Activated B cell treated with CpG ODN at 0.5 μM for 24 hours (primary cell): ENCODE measurements at regions of chr2 and their contacts with region 1.

Region 1: DNA sequence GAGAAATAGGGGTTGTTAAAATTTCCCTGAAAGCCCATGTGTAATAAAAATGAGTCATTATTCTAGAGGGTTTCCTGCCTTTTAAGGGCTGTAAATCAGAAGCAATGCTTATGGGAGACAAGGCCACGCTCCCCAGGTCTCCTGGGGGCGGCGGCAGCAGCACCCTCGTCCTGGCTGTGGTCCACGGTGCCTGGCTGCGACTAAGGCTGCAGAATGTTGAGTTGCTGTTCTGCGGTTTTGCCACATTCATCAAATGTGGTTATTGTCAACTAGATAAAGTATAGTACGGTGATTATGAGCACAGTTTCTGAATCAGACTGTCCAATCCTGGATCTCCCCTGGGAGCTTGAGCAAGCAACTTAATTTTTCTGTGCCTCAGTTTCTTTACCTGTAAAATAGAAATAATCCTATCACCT is 11.9 kb upstream of the AGFG1 start:
- DNase-seq: peak; percentile 53
- ATAC-seq: peak; percentile 78
- H3K4me3 Mint-ChIP-seq: peak overlapping the region; percentile 63
- H3K27ac Mint-ChIP-seq: peak overlapping the region; percentile 79
- H3K4me1 Mint-ChIP-seq: peaks cover 76% of the 10 kb centered on the region
- H3K27me3 Mint-ChIP-seq: no peaks in the 10 kb centered on the region
- CTCF ChIP-seq: no peak

Region 2: DNA sequence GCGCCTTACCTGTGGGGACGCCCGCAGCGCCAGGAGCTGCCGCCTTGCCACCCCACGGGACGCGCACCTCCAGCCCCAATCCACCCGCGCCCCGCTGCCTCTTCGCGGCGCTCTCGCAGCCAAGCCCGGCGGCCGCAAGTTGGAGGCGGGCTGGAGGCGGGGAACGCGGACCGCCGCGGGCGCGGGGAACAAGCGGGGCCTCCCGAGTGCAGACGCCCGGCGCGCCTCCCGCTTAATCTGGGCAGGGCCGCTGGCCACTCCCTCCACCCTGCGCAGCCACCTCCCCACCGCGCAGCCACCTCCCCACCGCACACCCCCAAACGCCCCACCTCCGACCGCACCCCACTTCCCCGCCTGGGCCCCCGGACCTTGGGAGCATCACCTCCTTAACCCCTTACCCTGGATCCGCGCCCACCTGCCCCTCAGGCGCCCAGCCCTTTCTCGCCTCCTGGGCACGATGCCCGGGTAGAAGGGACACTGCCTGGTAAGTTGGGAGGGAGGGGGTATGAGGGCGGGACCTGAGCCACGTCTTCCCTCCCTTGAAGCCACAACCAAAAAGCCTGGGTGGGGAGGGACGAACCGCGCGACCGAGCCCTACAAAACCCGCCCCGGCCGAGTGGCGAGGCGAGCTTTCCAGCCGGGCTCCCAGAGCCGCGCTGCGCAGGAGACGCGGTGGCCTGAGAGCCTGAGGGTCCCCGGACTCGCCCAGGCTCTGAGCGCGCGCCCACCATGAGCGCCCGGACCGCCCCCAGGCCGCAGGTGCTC is 295.9 kb before region 1 on chr2 and contains the starts of genes COL4A3 and COL4A4:
- CTCF ChIA-PET with region 1: no interaction called
- POLR2A ChIA-PET with region 1: no interaction called
- intact Hi-C with region 1: loop called (anchors 5 kb)
- DNase-seq: peak; percentile 54
- ATAC-seq: peak; percentile 78
- H3K4me3 Mint-ChIP-seq: peak within 1 kb of the TSS; percentile 87
- H3K27ac Mint-ChIP-seq: peak within 1 kb of the TSS; percentile 89
- H3K4me1 Mint-ChIP-seq: peaks cover 44% of the 10 kb centered on the region
- H3K27me3 Mint-ChIP-seq: peaks cover 5% of the 10 kb centered on the region
- CTCF ChIP-seq: no peak
- total RNA-seq, gene COL4A3: 15.5 and 18.3 TPM in 2 replicates
- total RNA-seq, gene COL4A4: 9.3 and 10.9 TPM in 2 replicates

Region 3: GRCh38 chr2:227363756-227364155 is 96.3 kb before region 1 on chr2:
- CTCF ChIA-PET with region 1: no interaction called
- POLR2A ChIA-PET with region 1: no interaction called
- intact Hi-C with region 1: loop called (anchors 5 kb)
- DNase-seq: no peak
- ATAC-seq: no peak
- H3K4me3 Mint-ChIP-seq: no peak overlapping the region
- H3K27ac Mint-ChIP-seq: no peak overlapping the region
- H3K4me1 Mint-ChIP-seq: peaks cover 4% of the 10 kb centered on the region
- H3K27me3 Mint-ChIP-seq: no peaks in the 10 kb centered on the region
- CTCF ChIP-seq: no peak

Region 4: DNA sequence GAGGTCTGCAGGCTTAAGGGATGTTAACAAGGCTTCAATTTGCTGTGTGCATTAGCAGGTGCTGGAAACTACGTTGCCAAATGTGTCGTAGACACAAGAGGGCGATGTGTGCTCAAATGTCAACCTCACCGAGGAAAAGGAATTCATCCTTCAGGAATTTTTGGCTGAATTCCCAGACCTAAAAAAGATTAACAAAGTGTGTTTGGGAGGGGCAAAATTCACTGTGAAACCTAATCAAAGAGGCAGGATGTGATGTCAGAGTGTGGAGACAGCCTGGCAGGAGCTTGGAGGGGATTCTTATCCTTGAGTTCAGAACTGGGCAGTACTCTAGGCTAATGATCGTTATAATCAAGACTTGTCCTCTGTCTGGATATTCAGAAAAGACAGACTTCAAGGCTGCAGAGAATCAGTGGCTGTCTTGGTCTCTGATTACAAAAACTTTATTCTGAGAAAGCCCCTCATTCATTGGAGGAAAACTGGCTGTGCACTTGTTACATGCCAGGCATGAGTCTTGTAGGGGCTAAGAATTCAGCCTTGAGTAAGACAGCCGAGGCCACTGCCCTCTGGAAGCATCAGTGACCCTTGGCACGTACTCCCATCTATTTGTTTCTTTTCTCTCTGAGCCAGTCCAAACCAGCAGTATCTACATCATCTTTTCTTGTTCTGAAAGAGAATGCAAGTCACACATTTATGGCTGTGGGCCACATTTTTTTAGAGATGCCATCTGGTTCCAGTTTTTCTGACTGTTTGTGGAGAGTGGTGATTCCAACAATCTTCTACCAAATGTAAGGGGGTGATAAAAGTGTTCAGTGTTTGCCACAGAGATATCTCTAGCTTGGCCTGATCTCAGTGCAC is 53.7 kb before region 1 on chr2:
- CTCF ChIA-PET with region 1: interaction called, 3 read pairs
- POLR2A ChIA-PET with region 1: interaction called, 10 read pairs
- intact Hi-C with region 1: loop called (anchors 1 kb)
- DNase-seq: no peak
- ATAC-seq: no peak
- H3K4me3 Mint-ChIP-seq: peak overlapping the region; percentile 35
- H3K27ac Mint-ChIP-seq: peak overlapping the region; percentile 5
- H3K4me1 Mint-ChIP-seq: peaks cover 46% of the 10 kb centered on the region
- H3K27me3 Mint-ChIP-seq: no peaks in the 10 kb centered on the region
- CTCF ChIP-seq: peak; percentile 30

Region 5: DNA sequence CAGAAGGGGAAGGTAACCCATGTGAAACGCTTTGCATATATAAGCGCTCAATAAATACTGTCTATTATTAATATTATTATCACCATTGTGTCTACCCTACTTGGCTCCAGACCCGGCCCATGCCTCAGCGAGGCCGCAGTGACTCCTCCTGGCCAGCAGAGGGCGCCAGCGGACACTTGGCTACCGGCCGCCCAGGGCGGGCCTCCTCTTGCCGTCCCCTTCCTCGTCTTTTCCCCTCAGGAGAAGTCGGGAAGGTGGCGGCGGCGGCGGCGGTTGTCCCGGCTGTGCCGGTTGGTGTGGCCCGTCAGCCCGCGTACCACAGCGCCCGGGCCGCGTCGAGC is 11.8 kb after region 1 on chr2 and contains the start of gene AGFG1:
- CTCF ChIA-PET with region 1: interaction called, 7 read pairs
- POLR2A ChIA-PET with region 1: interaction called, 10 read pairs
- intact Hi-C with region 1: loop called (anchors 1 kb)
- DNase-seq: peak; percentile 89
- ATAC-seq: peak; percentile 87
- H3K4me3 Mint-ChIP-seq: peak within 1 kb of the TSS; percentile 90
- H3K27ac Mint-ChIP-seq: peak within 1 kb of the TSS; percentile 78
- H3K4me1 Mint-ChIP-seq: peaks cover 36% of the 10 kb centered on the region
- H3K27me3 Mint-ChIP-seq: no peaks in the 10 kb centered on the region
- CTCF ChIP-seq: peak; percentile 77
- total RNA-seq, gene AGFG1: 108 and 125 TPM in 2 replicates